Prostate gland (tissue), 2 donors: ENCODE measurements at regions of chr6 and their contacts with region 1.

Region 1: DNA sequence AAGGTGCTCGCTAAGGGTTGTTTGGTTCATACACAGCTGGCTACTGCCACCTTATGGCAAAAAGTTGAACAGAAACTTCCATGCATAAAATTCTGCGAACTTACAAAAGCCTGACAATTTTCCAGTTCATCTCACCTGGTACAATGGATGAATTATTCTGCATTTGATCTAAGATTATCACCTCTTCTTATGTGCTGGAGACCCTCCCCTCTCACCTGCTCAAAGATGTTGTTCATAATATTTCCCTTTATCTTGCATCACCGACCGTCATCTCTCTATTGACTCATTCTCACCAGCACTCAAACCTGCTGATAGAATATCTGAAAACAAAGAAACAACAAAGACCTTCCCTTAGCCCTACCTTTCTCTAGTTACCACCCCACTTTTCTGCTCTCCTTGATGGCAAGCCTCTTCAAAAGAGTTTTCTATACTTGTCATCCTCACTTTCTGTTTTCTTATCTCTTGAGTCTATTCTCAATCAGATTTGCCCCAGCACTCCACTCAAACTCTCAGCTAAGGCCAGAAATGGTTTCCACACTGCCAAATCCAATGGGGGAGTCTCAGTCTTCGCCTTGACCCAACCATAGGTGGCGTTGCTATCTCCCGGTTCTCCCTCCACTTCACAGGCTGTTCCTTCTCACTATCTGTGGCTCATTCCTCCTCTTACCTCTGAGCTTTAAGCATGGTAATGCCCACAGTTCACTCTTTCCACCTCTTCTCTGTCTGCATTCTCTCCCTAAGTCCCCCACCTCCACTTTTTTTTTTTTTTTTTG is 25.8 kb downstream of the SNRNP48 start:
- DNase-seq: peak; percentile 48
- H3K4me3 ChIP-seq: no peak overlapping the region
- H3K27ac ChIP-seq: no peak overlapping the region
- H3K4me1 ChIP-seq: no peaks in the 10 kb centered on the region
- H3K27me3 ChIP-seq: no peaks in the 10 kb centered on the region
- CTCF ChIP-seq: peak; percentile 31 to 83 (median 78)
- POLR2A ChIP-seq: no peak

Region 2: GRCh38 chr6:6676910-6677441 is 938.8 kb before region 1 on chr6:
- intact Hi-C with region 1: loop called (anchors 5 kb)
- DNase-seq: peak; percentile 73
- H3K4me3 ChIP-seq: no peak overlapping the region
- H3K27ac ChIP-seq: no peak overlapping the region
- H3K4me1 ChIP-seq: no peaks in the 10 kb centered on the region
- H3K27me3 ChIP-seq: no peaks in the 10 kb centered on the region
- CTCF ChIP-seq: peak; percentile 91 to 96 (median 93)
- POLR2A ChIP-seq: no peak

Region 3: DNA sequence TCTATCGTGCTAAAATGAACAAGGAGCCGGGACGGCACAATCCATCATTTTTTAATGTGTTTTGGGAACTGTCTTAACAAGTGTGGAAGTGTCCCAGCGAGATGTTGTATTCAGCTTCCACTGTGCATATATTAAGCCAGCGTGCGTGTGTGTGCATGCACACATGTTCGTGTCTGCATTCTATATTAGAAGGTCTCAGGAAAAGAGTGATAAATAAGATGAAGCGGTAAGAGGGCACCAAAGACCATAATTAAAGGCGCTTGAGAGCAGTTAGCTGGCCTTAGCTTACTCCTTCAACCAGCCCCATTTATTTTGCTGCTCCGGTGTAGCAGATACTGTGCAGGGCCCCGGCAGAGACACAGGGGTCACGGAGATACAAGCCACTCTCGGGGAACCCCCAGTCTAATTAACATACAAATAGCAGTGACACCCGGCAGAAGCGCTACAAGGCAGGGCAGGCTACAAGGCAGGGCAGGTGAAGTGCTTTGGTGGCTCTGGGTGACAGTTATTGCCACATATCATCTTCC is 714.5 kb before region 1 on chr6:
- intact Hi-C with region 1: no loop called
- DNase-seq: no peak
- H3K4me3 ChIP-seq: no peak overlapping the region
- H3K27ac ChIP-seq: no peak overlapping the region
- H3K4me1 ChIP-seq: no peaks in the 10 kb centered on the region
- H3K27me3 ChIP-seq: no peaks in the 10 kb centered on the region
- CTCF ChIP-seq: peak in 1 of 4 experiments; percentile 30
- POLR2A ChIP-seq: no peak

Region 4: DNA sequence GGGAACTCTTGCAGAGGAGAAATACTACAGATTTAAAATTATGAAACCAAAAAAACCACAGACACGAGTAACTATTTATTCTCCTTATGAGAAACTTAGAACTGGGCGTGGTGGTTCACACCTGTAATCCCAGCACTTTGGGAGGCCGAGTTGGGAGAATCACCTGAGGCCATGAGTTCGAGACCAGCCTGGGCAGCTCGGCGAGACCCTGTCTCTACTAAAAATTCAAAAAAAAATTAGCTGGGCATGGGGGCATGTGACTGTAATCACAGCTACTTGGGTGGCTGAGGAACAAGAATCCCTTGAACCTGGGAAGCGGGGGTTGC is 339.6 kb before region 1 on chr6:
- intact Hi-C with region 1: loop called (anchors 5 kb)
- DNase-seq: no peak
- H3K4me3 ChIP-seq: no peak overlapping the region
- H3K27ac ChIP-seq: no peak overlapping the region
- H3K4me1 ChIP-seq: no peaks in the 10 kb centered on the region
- H3K27me3 ChIP-seq: no peaks in the 10 kb centered on the region
- CTCF ChIP-seq: no peak
- POLR2A ChIP-seq: no peak

Region 5: GRCh38 chr6:7513529-7513928 is 102.3 kb before region 1 on chr6:
- intact Hi-C with region 1: no loop called
- DNase-seq: peak; percentile 7
- H3K4me3 ChIP-seq: no peak overlapping the region
- H3K27ac ChIP-seq: no peak overlapping the region
- H3K4me1 ChIP-seq: no peaks in the 10 kb centered on the region
- H3K27me3 ChIP-seq: no peaks in the 10 kb centered on the region
- CTCF ChIP-seq: no peak
- POLR2A ChIP-seq: no peak

Region 6: GRCh38 chr6:7723041-7723447 is 107.2 kb after region 1 on chr6:
- intact Hi-C with region 1: no loop called
- DNase-seq: peak; percentile 70
- H3K4me3 ChIP-seq: no peak overlapping the region
- H3K27ac ChIP-seq: no peak overlapping the region
- H3K4me1 ChIP-seq: peaks cover 4% of the 10 kb centered on the region
- H3K27me3 ChIP-seq: no peaks in the 10 kb centered on the region
- CTCF ChIP-seq: peak; percentile 24 to 59 (median 56)
- POLR2A ChIP-seq: no peak